ENCODE measurements at regions of chr2 and their contacts with region 1.

Region 1: DNA sequence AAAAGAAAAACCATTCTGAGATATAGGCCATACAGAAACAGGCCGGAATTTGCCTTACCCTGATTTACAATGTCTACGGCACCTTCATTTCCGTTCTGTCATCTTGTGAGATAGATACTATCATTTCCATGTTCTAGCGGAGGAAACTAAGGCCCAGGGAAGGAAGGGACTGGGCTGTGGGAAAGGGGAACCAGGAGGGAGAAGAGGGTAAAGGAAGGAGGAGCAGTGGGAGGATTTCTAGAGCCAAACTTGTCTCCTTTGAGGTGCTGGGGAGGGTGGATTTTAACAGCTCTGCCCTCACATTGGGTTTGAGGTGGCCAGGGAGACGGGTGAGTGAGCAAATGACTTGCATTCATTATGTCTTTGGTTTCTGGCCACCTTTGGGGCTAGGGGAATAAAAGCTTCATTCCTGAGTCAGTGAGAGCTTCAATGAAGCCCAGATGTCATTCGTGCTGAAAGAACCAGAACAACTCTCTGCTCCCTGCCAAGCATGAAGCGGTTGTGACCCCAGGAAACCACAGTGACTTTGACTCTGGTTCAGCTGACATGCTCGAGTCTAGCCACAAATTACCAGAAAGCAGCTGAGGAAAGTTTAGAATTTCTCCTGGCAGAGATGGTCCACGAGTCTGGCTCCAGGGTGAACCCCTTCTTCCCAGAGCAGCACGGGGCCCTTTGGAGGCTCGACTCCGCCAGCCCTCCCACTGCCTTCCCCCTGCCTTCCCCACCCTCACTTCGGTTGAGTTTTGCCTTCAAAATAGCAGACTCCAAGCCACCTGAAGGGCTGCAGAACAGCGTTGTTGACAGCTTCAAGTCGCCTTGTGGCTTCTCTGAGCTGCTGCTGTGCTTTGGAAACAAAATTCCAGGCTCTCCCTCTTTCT is 3.8 kb downstream of the ACTG2 start:
- DNase-seq: peak; percentile 66
- ATAC-seq: peak; percentile 88
- H3K4me3 Mint-ChIP-seq: no peak overlapping the region
- H3K27ac Mint-ChIP-seq: peak overlapping the region; percentile 56
- H3K4me1 Mint-ChIP-seq: peaks cover 33% of the 10 kb centered on the region
- H3K27me3 Mint-ChIP-seq: no peaks in the 10 kb centered on the region

Region 2: DNA sequence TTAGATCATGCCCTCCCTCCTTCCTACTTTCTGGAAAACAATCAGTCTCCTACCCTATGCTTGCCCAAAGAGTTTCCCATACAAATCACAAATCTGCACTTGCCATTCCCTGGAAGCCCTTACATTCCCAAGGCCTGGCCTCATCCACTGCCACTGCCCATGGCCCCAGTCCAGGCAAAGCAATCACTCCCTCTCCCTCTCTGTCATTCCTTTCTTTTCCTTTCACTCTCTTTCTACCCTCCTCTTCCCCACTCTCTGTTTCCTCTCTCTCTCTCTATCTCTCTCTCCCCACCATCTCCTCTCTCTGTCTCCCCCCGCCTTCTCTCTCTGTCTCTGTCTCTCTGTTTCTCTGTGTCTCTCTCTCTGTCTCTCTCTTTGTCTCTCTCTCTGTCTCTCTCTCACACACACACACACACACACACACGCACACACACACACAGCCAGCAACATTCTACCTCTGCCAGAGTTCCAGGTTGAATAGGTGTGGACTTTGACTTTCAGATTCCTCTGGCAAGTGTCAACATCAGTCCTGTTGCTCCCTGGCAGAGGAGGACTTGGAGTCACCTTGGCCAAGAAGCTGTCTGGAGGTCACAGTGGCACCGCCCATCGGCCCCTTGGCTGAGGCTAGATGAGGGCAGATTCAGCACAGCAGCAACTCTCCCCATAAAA is 210.7 kb before region 1 on chr2:
- CTCF ChIA-PET with region 1: no interaction called
- POLR2A ChIA-PET with region 1: no interaction called
- intact Hi-C with region 1: loop called in 1 of 2 experiments (anchors 10 kb)
- DNase-seq: no peak
- ATAC-seq: no peak
- H3K4me3 Mint-ChIP-seq: no peak overlapping the region
- H3K27ac Mint-ChIP-seq: no peak overlapping the region
- H3K4me1 Mint-ChIP-seq: no peaks in the 10 kb centered on the region
- H3K27me3 Mint-ChIP-seq: no peaks in the 10 kb centered on the region

Region 3: GRCh38 chr2:73952499-73953458 is 56.2 kb after region 1 on chr2:
- CTCF ChIA-PET with region 1: no interaction called
- POLR2A ChIA-PET with region 1: no interaction called
- intact Hi-C with region 1: no loop called
- DNase-seq: no peak
- ATAC-seq: no peak
- H3K4me3 Mint-ChIP-seq: peak overlapping the region; percentile 6
- H3K27ac Mint-ChIP-seq: peak overlapping the region; percentile 77
- H3K4me1 Mint-ChIP-seq: peaks cover 63% of the 10 kb centered on the region
- H3K27me3 Mint-ChIP-seq: no peaks in the 10 kb centered on the region

Measured in activated CD4-positive, alpha-beta T cell treated with anti-CD3 and anti-CD28 coated beads for 36 hours (primary cell).